ENCODE measurements at regions of chrX and their contacts with region 1.

Region 1: DNA sequence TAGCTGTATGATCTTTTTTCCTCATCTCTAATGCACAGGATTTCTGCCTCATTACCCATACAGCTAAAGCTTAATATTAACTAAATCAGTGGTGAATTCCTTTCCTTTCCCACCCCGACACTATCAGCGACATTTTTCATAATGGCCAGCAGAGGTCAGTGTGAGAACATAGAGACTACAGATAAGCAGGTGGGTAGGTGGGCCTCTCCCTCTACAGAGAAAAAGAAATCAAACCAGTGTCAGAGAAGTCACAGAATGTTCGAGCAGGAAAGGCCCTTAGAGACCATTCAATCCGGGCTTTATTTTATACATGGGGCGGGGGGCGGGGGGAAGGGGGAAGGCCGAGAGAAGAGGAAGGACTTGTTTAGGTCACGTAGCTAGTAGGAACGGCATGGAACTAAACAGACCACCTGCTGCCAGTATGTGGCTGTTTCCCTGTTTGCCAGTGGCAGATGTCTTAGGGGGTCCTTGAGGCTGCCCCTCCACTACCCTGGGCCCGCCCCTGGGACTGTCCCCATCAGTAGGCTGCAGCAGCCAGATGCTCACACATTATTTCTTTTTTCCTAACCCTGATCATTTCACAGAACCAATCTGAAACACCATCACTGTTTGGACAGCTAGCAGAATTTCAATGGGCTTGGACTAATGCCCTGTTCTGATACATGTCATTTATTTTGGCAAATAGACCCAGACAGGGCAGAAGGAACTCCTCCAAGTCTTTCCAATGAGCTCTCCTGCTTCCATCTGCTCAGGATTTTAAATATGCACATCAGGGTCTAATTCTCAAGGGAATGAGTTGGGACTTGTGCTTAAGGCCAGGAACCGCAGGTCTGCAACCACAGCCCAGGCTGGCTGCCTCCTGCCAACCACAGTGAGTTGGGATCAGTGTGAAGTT is 133.4 kb downstream of the ATG4A start:
- DNase-seq: peak; percentile 10
- ATAC-seq: peak; percentile 59; the same call in 1 of the 2 replicates
- H3K4me3 ChIP-seq: no peak overlapping the region
- H3K27ac ChIP-seq: no peak overlapping the region
- H3K4me1 ChIP-seq: no peaks in the 10 kb centered on the region
- H3K27me3 ChIP-seq: no peaks in the 10 kb centered on the region
- CTCF ChIP-seq: peak; percentile 39 to 67 (median 45); a peak in 5 of 6 replicates
- POLR2A ChIP-seq: no peak
- RAD21 ChIP-seq: peak; percentile 64

Region 2: GRCh38 chrX:108312938-108313337 is 88.0 kb after region 1 on chrX:
- CTCF ChIA-PET with region 1: no interaction called
- POLR2A ChIA-PET with region 1: no interaction called
- RAD21 ChIA-PET with region 1: no interaction called
- intact Hi-C with region 1: no loop called
- DNase-seq: peak; percentile 55
- ATAC-seq: peak; percentile 93
- H3K4me3 ChIP-seq: no peak overlapping the region
- H3K27ac ChIP-seq: peak overlapping the region; percentile 22; the same call in 1 of the 2 replicates
- H3K4me1 ChIP-seq: peaks cover 14 to 59% of the 10 kb centered on the region in 2 experiments
- H3K27me3 ChIP-seq: no peaks in the 10 kb centered on the region
- CTCF ChIP-seq: no peak
- POLR2A ChIP-seq: no peak
- RAD21 ChIP-seq: no peak

Region 3: GRCh38 chrX:108537005-108537404 is 312.0 kb after region 1 on chrX:
- CTCF ChIA-PET with region 1: interaction called, 5 read pairs
- POLR2A ChIA-PET with region 1: no interaction called
- RAD21 ChIA-PET with region 1: no interaction called
- intact Hi-C with region 1: loop called (anchors 1 kb)
- DNase-seq: peak; percentile 13
- ATAC-seq: peak; percentile 72
- H3K4me3 ChIP-seq: no peak overlapping the region
- H3K27ac ChIP-seq: no peak overlapping the region
- H3K4me1 ChIP-seq: no peaks in the 10 kb centered on the region
- H3K27me3 ChIP-seq: no peaks in the 10 kb centered on the region
- CTCF ChIP-seq: peak; percentile 45 to 56 (median 50); a peak in 5 of 6 replicates
- POLR2A ChIP-seq: no peak
- RAD21 ChIP-seq: peak; percentile 71